ENCODE measurements at regions of chr4 and their contacts with region 1.

Region 1: DNA sequence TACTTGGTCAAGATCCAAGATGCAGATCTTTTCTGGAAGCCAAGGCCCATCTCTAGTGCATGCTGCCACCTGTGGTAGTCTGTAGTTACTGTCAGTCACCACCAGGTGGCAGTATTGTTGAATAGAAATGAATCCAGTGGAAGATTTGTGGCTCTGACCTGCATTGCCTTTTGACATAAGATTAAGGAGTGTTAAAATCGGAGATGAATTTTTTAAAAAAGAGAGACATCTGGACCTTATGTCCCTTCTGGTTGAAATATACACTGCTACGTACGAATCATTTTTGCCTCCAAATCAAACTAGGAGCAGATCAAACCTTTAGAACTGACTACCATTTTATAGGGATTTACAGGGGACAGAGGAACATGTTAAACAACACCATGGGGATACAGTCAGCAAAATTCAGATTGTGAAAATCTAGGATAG is 46.9 kb upstream of the RHOH start:
- H3K4me3 ChIP-seq: no peak overlapping the region
- H3K27ac ChIP-seq: no peak overlapping the region
- H3K4me1 ChIP-seq: no peaks in the 10 kb centered on the region
- CTCF ChIP-seq: no peak

Region 2: GRCh38 chr4:40170588-40170987 is 20.6 kb after region 1 on chr4:
- CTCF ChIA-PET with region 1: no interaction called
- POLR2A ChIA-PET with region 1: no interaction called
- H3K4me3 ChIP-seq: no peak overlapping the region
- H3K27ac ChIP-seq: no peak overlapping the region
- H3K4me1 ChIP-seq: no peaks in the 10 kb centered on the region
- CTCF ChIP-seq: no peak

Region 3: GRCh38 chr4:40289366-40290188 is 139.6 kb after region 1 on chr4:
- CTCF ChIA-PET with region 1: no interaction called
- POLR2A ChIA-PET with region 1: no interaction called
- H3K4me3 ChIP-seq: no peak overlapping the region
- H3K27ac ChIP-seq: no peak overlapping the region
- H3K4me1 ChIP-seq: no peaks in the 10 kb centered on the region
- CTCF ChIP-seq: no peak

Region 4: DNA sequence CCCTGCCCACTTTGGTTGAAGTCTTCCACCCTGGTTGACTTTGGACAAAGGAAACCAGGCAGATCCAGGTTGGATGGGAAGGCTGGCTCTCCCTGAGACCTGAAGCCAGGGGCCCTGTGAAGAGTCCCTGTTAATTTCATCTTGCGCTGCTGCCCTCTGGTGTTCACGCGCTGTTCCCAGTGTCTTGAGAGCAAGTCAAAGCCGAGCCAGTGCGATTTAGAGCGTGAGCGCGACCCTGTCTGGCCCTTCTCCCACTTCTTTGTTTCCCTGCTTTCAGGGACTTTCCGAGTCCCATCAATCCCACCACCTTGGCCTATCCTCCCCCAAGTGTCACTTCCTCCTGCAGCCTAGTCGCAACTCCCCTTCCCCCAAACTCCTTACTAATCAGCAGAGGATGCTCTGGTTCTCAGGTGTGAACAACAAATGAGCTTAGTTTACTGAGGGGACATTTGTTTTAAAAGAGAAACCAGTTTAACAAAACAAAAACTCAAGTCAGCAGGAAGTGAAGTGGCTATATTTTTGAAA is 159.3 kb after region 1 on chr4:
- CTCF ChIA-PET with region 1: interaction called, 13 read pairs
- POLR2A ChIA-PET with region 1: no interaction called
- H3K4me3 ChIP-seq: no peak overlapping the region
- H3K27ac ChIP-seq: no peak overlapping the region
- H3K4me1 ChIP-seq: no peaks in the 10 kb centered on the region
- CTCF ChIP-seq: peak; percentile 55; the same call in 1 of the 2 replicates

Measured in HEK293 (cell line).